ENCODE measurements at regions of chr2 and their contacts with region 1.

Region 1: GRCh38 chr2:188937228-188938220 is 36.6 kb upstream of the COL3A1 start:
- DNase-seq: no peak
- ATAC-seq: peak; percentile 87

Region 2: GRCh38 chr2:188659656-188660406 is 277.7 kb before region 1 on chr2:
- intact Hi-C with region 1: no loop called
- DNase-seq: no peak
- ATAC-seq: no peak

Region 3: DNA sequence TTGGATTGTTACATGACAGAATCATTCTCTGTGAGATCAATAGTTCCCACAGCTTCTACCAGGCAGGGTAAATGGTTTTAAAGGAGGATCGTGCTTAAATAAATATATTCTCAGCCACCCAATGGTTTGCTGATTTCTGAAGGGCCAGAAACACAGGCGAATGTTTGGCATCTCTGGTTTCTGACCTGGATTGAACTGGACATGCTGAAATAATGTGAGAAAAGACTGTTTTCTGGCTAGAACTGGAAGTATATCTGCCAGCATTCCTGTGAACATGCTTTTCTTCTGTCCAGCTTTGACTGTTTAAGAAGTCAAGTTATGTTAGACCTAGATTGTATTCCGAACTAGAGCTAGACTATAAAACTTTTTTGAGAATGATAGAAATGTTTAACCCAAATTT is 40.4 kb before region 1 on chr2:
- intact Hi-C with region 1: loop called (anchors 5 kb)
- DNase-seq: no peak
- ATAC-seq: peak; percentile 85

Region 4: DNA sequence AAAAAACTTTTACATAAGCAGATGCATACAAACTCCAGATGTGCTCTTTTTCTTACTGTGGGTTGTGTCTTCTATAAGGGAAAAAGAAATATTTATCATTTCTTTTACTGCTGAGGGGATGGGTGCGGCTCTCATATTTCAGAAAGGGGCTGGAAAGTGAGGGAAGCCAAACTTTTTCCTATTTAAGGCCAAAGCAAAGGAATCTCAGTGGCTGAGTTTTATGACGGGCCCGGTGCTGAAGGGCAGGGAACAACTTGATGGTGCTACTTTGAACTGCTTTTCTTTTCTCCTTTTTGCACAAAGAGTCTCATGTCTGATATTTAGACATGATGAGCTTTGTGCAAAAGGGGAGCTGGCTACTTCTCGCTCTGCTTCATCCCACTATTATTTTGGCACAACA is 36.6 kb after region 1 on chr2 and contains the start of gene COL3A1:
- intact Hi-C with region 1: loop called (anchors 5 kb)
- DNase-seq: peak; percentile 75
- ATAC-seq: peak; percentile 26
- total RNA-seq, gene COL3A1: 72.7 TPM